ENCODE measurements at regions of chr10 and their contacts with region 1.

Region 1: DNA sequence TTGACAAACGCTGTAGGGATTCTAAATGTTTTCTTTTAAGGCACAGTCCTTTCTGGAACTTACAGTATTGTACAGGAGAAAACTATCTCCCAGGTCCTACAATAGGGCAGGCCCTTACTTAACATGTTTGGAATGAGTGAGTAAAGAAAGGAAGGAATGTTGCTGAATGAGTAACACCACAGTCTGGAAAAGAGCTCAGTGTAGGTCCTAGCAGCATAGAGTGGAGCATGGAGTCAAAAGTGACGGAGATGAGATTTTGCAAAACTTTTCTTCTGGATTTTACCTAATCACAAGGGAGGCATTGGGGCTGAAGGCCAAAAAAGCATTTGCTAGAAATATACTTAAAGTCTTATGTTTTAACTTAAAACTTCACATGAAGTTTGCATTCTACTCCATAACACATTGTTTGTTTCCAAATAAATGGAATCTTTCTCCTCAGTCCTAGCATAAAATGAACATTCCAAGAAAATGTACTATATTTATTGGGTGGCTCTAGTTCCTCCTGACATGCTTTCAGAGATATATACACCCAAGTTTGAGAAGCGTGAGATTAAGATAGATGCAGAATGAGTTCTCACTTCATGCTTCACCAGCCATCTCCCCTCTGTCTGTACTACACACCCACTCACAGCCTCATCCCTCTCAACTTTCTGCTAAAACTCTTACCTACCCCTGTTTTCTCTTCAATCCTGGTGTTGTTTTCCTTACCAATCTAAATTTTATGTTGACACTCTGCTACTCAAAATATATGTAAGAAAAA is 20.2 kb upstream of the ADD3 start:
- DNase-seq: no peak
- CTCF ChIP-seq: no peak

Region 2: DNA sequence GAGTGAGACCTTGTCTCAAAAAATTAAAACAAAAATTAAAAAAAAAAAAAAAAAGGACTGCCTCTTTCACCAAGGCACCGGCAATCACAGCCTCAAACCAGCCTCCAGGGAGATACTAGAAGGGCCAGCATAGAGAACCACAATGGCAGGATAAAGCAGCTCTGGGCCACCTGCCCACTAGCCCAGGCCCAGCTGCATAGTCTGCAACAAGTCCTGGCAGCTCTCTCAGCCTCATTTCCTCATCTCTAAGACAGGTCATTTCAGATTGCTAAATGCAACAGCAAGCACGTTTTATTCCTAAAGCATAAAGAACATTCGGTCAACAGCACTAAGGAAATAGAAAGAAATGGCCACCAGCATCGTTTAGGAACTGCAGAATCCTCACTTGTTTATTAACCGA is 93.1 kb before region 1 on chr10:
- in situ Hi-C with region 1: loop called (anchors 10 kb)
- DNase-seq: no peak
- CTCF ChIP-seq: no peak

Region 3: DNA sequence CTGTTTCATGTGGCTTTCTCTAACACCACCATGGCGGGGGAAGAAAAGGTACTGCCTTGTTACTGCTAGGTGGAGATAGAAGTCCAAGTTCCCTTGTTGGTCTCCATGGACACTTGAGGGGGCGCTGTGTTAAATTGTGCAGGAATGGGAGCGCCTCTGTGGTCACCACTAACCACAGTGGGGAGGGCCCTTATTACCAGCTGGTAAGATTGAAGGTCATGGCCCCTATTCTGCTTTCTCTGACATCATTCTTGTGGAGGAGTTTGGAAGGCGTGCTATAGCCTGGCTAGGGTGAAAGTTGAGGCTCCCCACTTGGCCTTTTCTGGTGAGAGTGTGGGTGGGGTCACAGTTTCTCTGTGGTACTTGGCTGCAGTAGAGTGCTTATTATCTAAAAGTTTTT is 204.9 kb after region 1 on chr10:
- in situ Hi-C with region 1: no loop called
- DNase-seq: no peak
- CTCF ChIP-seq: peak; percentile 50

Region 4: GRCh38 chr10:111151595-111152307 is 1164.1 kb after region 1 on chr10:
- in situ Hi-C with region 1: no loop called
- DNase-seq: no peak
- CTCF ChIP-seq: no peak